ENCODE measurements at regions of chrX and their contacts with region 1.

Region 1: GRCh38 chrX:102950908-102951866 is 14.1 kb downstream of the RAB40AL start:
- DNase-seq: peak; percentile 74 to 85
- H3K4me3 ChIP-seq: peak overlapping the region; percentile 13
- H3K4me1 ChIP-seq: peaks cover 8% of the 10 kb centered on the region
- H3K27me3 ChIP-seq: no peaks in the 10 kb centered on the region

Region 2: GRCh38 chrX:103157496-103158320 is 206.5 kb after region 1 on chrX:
- in situ Hi-C with region 1: loop called (anchors 25 kb)
- DNase-seq: peak; percentile 22 to 56
- H3K4me3 ChIP-seq: no peak overlapping the region
- H3K4me1 ChIP-seq: no peaks in the 10 kb centered on the region
- H3K27me3 ChIP-seq: peaks cover 3% of the 10 kb centered on the region; the same call in 1 of the 2 replicates